ENCODE measurements at regions of chr7 and their contacts with region 1.

Region 1: DNA sequence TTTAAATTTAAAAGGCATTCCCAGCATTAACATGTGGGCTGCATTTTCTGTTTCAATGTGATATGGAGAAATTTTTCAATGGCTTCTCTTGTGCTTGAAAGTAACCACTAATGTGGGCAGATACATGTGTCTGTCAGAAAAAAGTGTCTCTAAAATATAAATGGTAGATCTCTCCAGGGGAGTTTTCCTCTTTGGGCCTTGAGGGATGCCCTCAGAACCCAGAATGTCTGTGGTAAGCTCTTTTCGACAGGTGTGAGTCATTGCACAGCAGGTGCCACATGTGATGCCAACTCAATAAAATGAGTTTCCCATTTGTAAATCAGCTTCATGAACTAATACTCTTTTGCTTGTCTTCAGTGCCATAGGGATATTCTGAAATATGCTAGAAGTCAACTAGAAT is 221.0 kb downstream of the SEMA3E start:
- DNase-seq: no peak
- H3K4me3 ChIP-seq: no peak overlapping the region
- H3K4me3 Mint-ChIP-seq: no peak overlapping the region
- H3K27ac Mint-ChIP-seq: no peak overlapping the region
- H3K4me1 ChIP-seq: no peaks in the 10 kb centered on the region
- H3K4me1 Mint-ChIP-seq: no peaks in the 10 kb centered on the region
- H3K27me3 ChIP-seq: no peaks in the 10 kb centered on the region
- H3K27me3 Mint-ChIP-seq: peaks cover 2% of the 10 kb centered on the region
- CTCF ChIP-seq: no peak

Region 2: DNA sequence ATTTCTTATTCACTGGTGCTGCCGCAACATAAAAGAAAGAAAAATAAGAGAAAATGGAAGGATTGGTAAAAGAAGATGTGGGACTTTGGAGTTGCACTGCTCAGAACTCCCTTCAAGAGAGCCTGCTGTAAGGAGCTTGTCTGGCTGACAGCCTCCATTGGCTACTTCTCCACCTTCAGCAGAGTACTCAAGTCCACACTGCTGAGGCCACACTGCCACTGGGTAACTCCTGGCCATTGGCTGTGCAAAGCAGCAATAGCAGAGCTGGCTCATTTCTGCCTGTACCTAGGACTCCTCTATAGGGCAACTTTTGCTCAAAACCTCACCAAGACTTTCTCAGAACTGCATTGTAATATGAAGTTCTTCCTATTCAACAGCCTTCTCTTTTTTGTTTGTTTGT is 226.6 kb before region 1 on chr7:
- CTCF ChIA-PET with region 1: no interaction called
- POLR2A ChIA-PET with region 1: no interaction called
- intact Hi-C with region 1: no loop called
- DNase-seq: peak in 1 of 2 experiments; percentile 30
- H3K4me3 ChIP-seq: no peak overlapping the region
- H3K4me3 Mint-ChIP-seq: no peak overlapping the region
- H3K27ac Mint-ChIP-seq: no peak overlapping the region
- H3K4me1 ChIP-seq: no peaks in the 10 kb centered on the region
- H3K4me1 Mint-ChIP-seq: no peaks in the 10 kb centered on the region
- H3K27me3 ChIP-seq: no peaks in the 10 kb centered on the region
- H3K27me3 Mint-ChIP-seq: peaks cover 4% of the 10 kb centered on the region
- CTCF ChIP-seq: no peak

Region 3: DNA sequence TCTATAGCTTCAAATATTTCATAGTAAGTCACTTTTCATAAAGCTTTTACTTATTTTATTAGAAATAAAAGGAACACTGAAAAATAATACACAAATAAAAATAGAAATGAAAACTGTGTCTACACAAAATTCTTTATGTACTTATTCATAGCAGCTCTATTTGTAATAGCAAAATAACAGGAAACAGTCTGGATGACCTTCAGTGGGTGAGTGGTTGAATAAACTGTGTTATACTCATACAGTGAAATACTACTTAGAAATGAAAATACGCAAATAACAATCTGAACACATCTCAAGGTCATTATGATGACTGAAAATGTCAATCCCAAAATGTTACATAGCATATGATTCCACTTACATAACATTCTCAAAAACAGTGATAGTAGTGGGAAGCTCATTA is 126.5 kb before region 1 on chr7:
- CTCF ChIA-PET with region 1: no interaction called
- POLR2A ChIA-PET with region 1: no interaction called
- intact Hi-C with region 1: no loop called
- DNase-seq: no peak
- H3K4me3 ChIP-seq: no peak overlapping the region
- H3K4me3 Mint-ChIP-seq: no peak overlapping the region
- H3K27ac Mint-ChIP-seq: no peak overlapping the region
- H3K4me1 ChIP-seq: no peaks in the 10 kb centered on the region
- H3K4me1 Mint-ChIP-seq: no peaks in the 10 kb centered on the region
- H3K27me3 ChIP-seq: no peaks in the 10 kb centered on the region
- H3K27me3 Mint-ChIP-seq: peaks cover 2% of the 10 kb centered on the region
- CTCF ChIP-seq: no peak

Region 4: GRCh38 chr7:83475420-83475819 is 47.5 kb after region 1 on chr7:
- CTCF ChIA-PET with region 1: no interaction called
- POLR2A ChIA-PET with region 1: no interaction called
- intact Hi-C with region 1: loop called (anchors 1 kb)
- DNase-seq: peak; percentile 58 to 64
- H3K4me3 ChIP-seq: no peak overlapping the region
- H3K4me3 Mint-ChIP-seq: peak overlapping the region; percentile 28
- H3K27ac Mint-ChIP-seq: no peak overlapping the region
- H3K4me1 ChIP-seq: no peaks in the 10 kb centered on the region
- H3K4me1 Mint-ChIP-seq: no peaks in the 10 kb centered on the region
- H3K27me3 ChIP-seq: no peaks in the 10 kb centered on the region
- H3K27me3 Mint-ChIP-seq: peaks cover 6% of the 10 kb centered on the region
- CTCF ChIP-seq: peak; percentile 47 to 50

Region 5: DNA sequence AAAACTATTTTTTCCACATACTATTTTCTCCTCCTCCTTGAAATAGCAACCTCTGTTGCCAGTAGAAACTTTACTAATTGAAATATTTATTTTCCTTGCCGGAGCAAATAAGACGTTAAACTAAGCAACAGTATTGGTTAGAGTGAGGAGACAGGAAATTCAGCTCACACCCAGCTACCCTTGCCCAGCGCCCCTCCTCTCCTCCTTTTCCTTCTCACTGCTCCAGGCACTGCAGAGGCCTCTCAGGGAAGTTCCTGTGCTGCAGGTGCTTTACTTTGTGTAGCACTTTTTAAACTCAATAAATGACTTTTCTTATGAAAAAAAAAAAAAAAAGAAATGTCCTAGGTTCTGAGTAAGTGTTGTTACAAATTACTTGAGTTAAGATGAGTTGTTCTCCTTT is 87.0 kb after region 1 on chr7:
- CTCF ChIA-PET with region 1: no interaction called
- POLR2A ChIA-PET with region 1: no interaction called
- intact Hi-C with region 1: loop called (anchors 5 kb)
- DNase-seq: no peak
- H3K4me3 ChIP-seq: no peak overlapping the region
- H3K4me3 Mint-ChIP-seq: no peak overlapping the region
- H3K27ac Mint-ChIP-seq: no peak overlapping the region
- H3K4me1 ChIP-seq: no peaks in the 10 kb centered on the region
- H3K4me1 Mint-ChIP-seq: no peaks in the 10 kb centered on the region
- H3K27me3 ChIP-seq: no peaks in the 10 kb centered on the region
- H3K27me3 Mint-ChIP-seq: peaks cover 2% of the 10 kb centered on the region
- CTCF ChIP-seq: no peak

Region 6: GRCh38 chr7:84021292-84021908 is 593.5 kb after region 1 on chr7:
- CTCF ChIA-PET with region 1: no interaction called
- POLR2A ChIA-PET with region 1: no interaction called
- intact Hi-C with region 1: no loop called
- DNase-seq: no peak
- H3K4me3 ChIP-seq: no peak overlapping the region
- H3K4me3 Mint-ChIP-seq: no peak overlapping the region
- H3K27ac Mint-ChIP-seq: peak overlapping the region; percentile 53
- H3K4me1 ChIP-seq: peaks cover 65% of the 10 kb centered on the region
- H3K4me1 Mint-ChIP-seq: peaks cover 23% of the 10 kb centered on the region
- H3K27me3 ChIP-seq: no peaks in the 10 kb centered on the region
- H3K27me3 Mint-ChIP-seq: no peaks in the 10 kb centered on the region
- CTCF ChIP-seq: no peak